ENCODE measurements at regions of chr14 and their contacts with region 1.

Region 1: GRCh38 chr14:85622090-85622489 is 92.1 kb downstream of the FLRT2 start:
- DNase-seq: no peak
- H3K4me3 ChIP-seq: no peak overlapping the region
- H3K27ac ChIP-seq: no peak overlapping the region
- H3K27me3 ChIP-seq: no peaks in the 10 kb centered on the region
- CTCF ChIP-seq: no peak

Region 2: DNA sequence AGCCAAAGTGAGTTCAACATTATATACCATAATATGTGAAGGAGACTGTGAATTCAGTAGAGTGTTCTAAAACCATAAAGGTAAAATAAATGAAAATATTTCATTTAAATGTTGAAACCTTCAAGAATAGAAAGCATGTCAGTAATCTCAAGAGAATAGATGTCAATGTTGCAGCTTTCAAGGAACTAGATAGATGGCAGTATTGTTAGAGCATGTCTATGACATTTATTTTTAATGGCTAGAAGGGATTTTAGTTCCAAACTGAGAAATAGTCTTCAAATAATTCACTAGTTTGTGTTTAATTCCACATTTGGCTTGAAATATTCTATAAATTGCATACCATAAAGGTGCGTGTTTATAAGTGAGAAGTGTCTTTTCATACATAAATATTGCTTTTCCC is 234.3 kb after region 1 on chr14:
- CTCF ChIA-PET with region 1: interaction called, 13 read pairs
- POLR2A ChIA-PET with region 1: no interaction called
- DNase-seq: no peak
- H3K4me3 ChIP-seq: no peak overlapping the region
- H3K27ac ChIP-seq: no peak overlapping the region
- H3K27me3 ChIP-seq: no peaks in the 10 kb centered on the region
- CTCF ChIP-seq: no peak; the same call in 1 of the 2 replicates

Measured in AG04450 (cell line).